ENCODE measurements at regions of chr7 and their contacts with region 1.

Region 1: GRCh38 chr7:132394283-132395198 is 181.7 kb downstream of the PLXNA4 start:
- DNase-seq: peak; percentile 38
- H3K4me3 Mint-ChIP-seq: no peak overlapping the region
- H3K27ac Mint-ChIP-seq: no peak overlapping the region
- H3K4me1 Mint-ChIP-seq: peaks cover 12% of the 10 kb centered on the region
- H3K27me3 Mint-ChIP-seq: peaks cover 13% of the 10 kb centered on the region

Region 2: DNA sequence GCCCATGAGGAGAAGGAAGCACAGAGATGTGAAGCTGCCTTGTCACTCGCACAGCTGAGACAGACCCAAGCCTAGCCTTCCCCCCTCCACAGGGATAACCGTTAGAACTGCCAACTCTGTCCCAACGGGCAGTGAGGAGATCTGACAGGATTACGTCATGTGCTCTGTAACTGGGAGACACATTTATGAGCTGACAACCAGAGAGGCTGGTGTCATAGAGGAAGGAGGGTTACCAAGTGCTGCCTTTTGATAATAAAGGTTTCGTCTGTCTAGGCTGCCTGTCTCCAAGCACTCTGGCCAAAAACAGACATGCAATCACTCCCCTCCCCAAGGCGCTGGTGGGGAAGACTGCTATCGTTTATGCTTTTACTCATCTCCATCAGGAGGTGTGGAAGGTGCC is 15.8 kb after region 1 on chr7:
- CTCF ChIA-PET with region 1: no interaction called
- POLR2A ChIA-PET with region 1: no interaction called
- DNase-seq: no peak
- H3K4me3 Mint-ChIP-seq: no peak overlapping the region
- H3K27ac Mint-ChIP-seq: no peak overlapping the region
- H3K4me1 Mint-ChIP-seq: peaks cover 2% of the 10 kb centered on the region
- H3K27me3 Mint-ChIP-seq: peaks cover 16% of the 10 kb centered on the region

Region 3: GRCh38 chr7:132500727-132501440 is 106.3 kb after region 1 on chr7:
- CTCF ChIA-PET with region 1: no interaction called
- POLR2A ChIA-PET with region 1: no interaction called
- DNase-seq: no peak
- H3K4me3 Mint-ChIP-seq: no peak overlapping the region
- H3K27ac Mint-ChIP-seq: no peak overlapping the region
- H3K4me1 Mint-ChIP-seq: no peaks in the 10 kb centered on the region
- H3K27me3 Mint-ChIP-seq: peaks cover 11% of the 10 kb centered on the region

Region 4: DNA sequence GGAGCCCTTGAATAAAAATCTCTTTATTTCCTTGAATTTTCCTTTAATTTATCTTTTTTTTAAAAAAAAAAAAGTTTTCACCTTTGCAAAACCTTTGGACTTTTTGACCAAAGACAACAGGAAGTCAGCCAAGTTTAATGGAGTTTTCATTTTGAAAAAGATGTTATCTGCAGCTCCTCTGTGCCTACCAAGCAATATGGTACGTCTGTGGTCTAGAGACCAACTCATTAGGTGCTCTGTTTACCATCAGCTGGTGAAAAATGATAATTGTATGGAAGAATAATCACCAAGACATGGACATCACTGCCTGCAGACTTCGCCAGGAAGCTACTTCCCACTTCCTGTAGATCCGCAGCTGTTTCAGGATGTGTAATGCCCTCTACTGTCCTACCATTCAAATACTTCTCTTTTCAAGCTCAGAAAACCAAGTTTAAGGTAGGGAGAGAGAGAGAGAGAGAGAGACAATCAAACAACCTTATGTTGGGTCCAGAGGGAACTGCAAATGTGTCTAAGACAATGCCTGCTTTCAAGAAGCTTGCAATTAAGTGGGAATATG is 163.0 kb after region 1 on chr7:
- CTCF ChIA-PET with region 1: interaction called, 17 read pairs
- POLR2A ChIA-PET with region 1: no interaction called
- DNase-seq: no peak
- H3K4me3 Mint-ChIP-seq: no peak overlapping the region
- H3K27ac Mint-ChIP-seq: no peak overlapping the region
- H3K4me1 Mint-ChIP-seq: peaks cover 7% of the 10 kb centered on the region
- H3K27me3 Mint-ChIP-seq: peaks cover 7% of the 10 kb centered on the region

Region 5: DNA sequence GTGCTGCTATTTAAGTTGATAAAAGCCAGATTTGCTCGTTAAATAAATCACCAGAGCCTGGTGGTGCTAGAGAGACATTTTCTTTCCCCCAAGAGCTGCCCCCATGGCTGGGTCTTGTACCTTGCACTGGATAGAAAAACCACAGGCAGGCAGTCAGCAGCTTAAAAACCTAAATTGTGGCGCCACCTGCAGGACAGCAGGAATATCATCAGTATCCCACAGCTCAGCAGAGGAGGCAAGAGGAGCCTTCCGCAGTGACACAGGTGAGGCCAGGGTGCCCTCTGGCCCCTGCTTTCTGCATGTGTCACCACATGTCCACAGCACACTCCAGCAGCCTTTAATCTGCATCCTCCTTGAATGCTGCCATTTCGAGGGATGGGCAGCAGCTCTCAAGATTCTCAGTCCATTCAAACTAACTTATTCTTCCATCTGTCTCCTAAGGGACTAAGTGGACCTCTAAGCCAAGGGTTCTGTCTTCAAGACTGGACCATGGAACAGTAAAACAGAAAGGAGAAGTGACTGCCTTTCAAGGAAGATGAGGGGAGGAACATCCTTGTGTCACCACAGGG is 186.3 kb after region 1 on chr7:
- CTCF ChIA-PET with region 1: interaction called, 162 read pairs
- POLR2A ChIA-PET with region 1: interaction called, 5 read pairs
- DNase-seq: peak; percentile 77
- H3K4me3 Mint-ChIP-seq: no peak overlapping the region
- H3K27ac Mint-ChIP-seq: no peak overlapping the region
- H3K4me1 Mint-ChIP-seq: peaks cover 9% of the 10 kb centered on the region
- H3K27me3 Mint-ChIP-seq: peaks cover 36% of the 10 kb centered on the region